Heart right ventricle (tissue), 16 donors: ENCODE measurements at regions of chr1 and their contacts with region 1.

Region 1: GRCh38 chr1:24391882-24392603 is 21.5 kb downstream of the STPG1 start:
- DNase-seq: peak; percentile 48 to 55
- ATAC-seq: peak; percentile 81 to 91 (median 88)
- H3K4me3 ChIP-seq: peak overlapping the region in 7 of 10 donors; percentile 11 to 36 (median 25)
- H3K27ac ChIP-seq: peak overlapping the region in 9 of 10 donors; percentile 57 to 85 (median 78)
- H3K4me1 ChIP-seq: peaks cover 0 to 31% (median 15%) of the 10 kb centered on the region in 9 donors
- H3K27me3 ChIP-seq: no peaks in the 10 kb centered on the region
- CTCF ChIP-seq: peak; percentile 43 to 79 (median 71)

Region 2: GRCh38 chr1:24329797-24330543 is 62.1 kb before region 1 on chr1:
- intact Hi-C with region 1: no loop called
- DNase-seq: no peak
- ATAC-seq: peak in 1 of 8 donors; percentile 39
- H3K4me3 ChIP-seq: no peak overlapping the region
- H3K27ac ChIP-seq: no peak overlapping the region
- H3K4me1 ChIP-seq: no peaks in the 10 kb centered on the region
- H3K27me3 ChIP-seq: peaks cover 0 to 14% (median 0%) of the 10 kb centered on the region in 7 donors
- CTCF ChIP-seq: no peak

Region 3: DNA sequence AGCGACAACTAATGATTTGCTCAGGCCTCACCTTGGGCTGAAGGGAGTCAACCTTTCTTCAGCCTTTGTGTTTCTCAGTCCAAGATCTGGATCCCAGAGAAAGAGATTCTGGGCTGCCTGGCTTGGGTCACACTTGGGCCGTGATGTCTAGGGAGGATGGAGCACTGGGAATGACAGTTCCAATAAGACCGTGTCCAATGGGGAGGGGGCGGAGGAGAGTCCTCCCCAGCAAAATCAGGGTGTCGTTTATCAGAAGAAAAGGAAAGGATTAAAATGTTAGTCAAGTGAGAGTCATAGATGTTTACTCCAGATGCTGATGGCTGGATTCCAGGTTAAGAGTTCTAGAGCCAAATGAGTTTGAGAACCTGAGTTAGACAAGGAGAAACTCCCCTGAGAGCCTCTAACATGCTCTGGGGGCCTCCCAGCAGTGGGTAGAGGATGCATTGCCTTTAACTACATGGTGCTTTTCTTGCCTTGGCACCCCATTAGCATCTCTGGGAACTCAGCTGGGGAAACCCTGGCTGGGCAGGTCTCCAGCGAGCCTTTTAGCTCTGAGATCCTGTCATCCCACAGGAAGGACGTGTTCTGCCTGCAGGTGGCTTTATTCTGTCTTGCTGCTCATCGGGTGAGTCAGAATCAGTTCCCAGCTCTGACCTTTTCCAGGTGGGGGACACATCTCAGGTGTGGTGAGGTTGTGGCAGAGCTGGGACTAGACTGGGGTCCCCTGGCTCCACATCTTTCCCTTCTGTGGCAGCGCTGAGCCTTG is 45.8 kb after region 1 on chr1:
- intact Hi-C with region 1: no loop called
- DNase-seq: peak; percentile 14 to 29
- ATAC-seq: peak in 6 of 8 donors; percentile 17 to 62 (median 44)
- H3K4me3 ChIP-seq: peak overlapping the region in 2 of 10 donors; percentile 10 to 13
- H3K27ac ChIP-seq: peak overlapping the region in 6 of 10 donors; percentile 43 to 70 (median 56)
- H3K4me1 ChIP-seq: peaks cover 2 to 34% (median 21%) of the 10 kb centered on the region in 9 donors
- H3K27me3 ChIP-seq: no peaks in the 10 kb centered on the region
- CTCF ChIP-seq: no peak

Region 4: GRCh38 chr1:24642481-24643361 is 250.7 kb after region 1 on chr1 and contains the start of gene SRRM1:
- intact Hi-C with region 1: loop called in 3 of 10 experiments (anchors 5 to 10 kb)
- DNase-seq: peak; percentile 98 to 100
- ATAC-seq: peak; percentile 95 to 98 (median 97)
- H3K4me3 ChIP-seq: peak within 1 kb of the TSS; percentile 62 to 99 (median 89)
- H3K27ac ChIP-seq: peak within 1 kb of the TSS; percentile 94 to 100 (median 98)
- H3K4me1 ChIP-seq: peaks cover 0 to 39% (median 28%) of the 10 kb centered on the region in 9 donors
- H3K27me3 ChIP-seq: no peaks in the 10 kb centered on the region
- CTCF ChIP-seq: peak in 3 of 9 donors; percentile 4 to 41 (median 32)
- total RNA-seq, gene SRRM1: 54.4 to 82.9 (median 75.8) TPM